ENCODE measurements at regions of chr19 and their contacts with region 1.

Region 1: GRCh38 chr19:51311351-51312257 is at the start of gene IGLON5:
- DNase-seq: no peak
- H3K4me3 Mint-ChIP-seq: no peak within 1 kb of the TSS
- H3K27ac Mint-ChIP-seq: no peak within 1 kb of the TSS
- H3K4me1 Mint-ChIP-seq: peaks cover 2% of the 10 kb centered on the region
- H3K27me3 Mint-ChIP-seq: peaks cover 44% of the 10 kb centered on the region
- total RNA-seq, gene IGLON5: 0.07 to 0.24 TPM

Region 2: GRCh38 chr19:51327066-51328001 is 15.7 kb after region 1 on chr19:
- CTCF ChIA-PET with region 1: no interaction called
- POLR2A ChIA-PET with region 1: no interaction called
- intact Hi-C with region 1: loop called (anchors 2 kb)
- DNase-seq: peak; percentile 78
- H3K4me3 Mint-ChIP-seq: peak overlapping the region; percentile 14
- H3K27ac Mint-ChIP-seq: no peak overlapping the region
- H3K4me1 Mint-ChIP-seq: peaks cover 7% of the 10 kb centered on the region
- H3K27me3 Mint-ChIP-seq: peaks cover 52% of the 10 kb centered on the region

Measured in activated CD4-positive, alpha-beta memory T cell treated with anti-CD3 and anti-CD28 coated beads for 36 hours (primary cell).